ENCODE measurements at regions of chr2 and their contacts with region 1.

Region 1: GRCh38 chr2:97688062-97688827 is 18.7 kb downstream of the C2orf92 start:
- DNase-seq: no peak
- ATAC-seq: peak; percentile 96
- H3K4me3 Mint-ChIP-seq: no peak overlapping the region
- H3K27ac Mint-ChIP-seq: peak overlapping the region; percentile 73
- H3K4me1 Mint-ChIP-seq: peaks cover 10% of the 10 kb centered on the region
- H3K27me3 Mint-ChIP-seq: no peaks in the 10 kb centered on the region

Region 2: GRCh38 chr2:97673182-97673914 is 14.9 kb before region 1 on chr2:
- CTCF ChIA-PET with region 1: interaction called, 3 read pairs
- POLR2A ChIA-PET with region 1: interaction called, 5 read pairs
- intact Hi-C with region 1: loop called in 1 of 2 experiments (anchors 1 kb)
- DNase-seq: peak; percentile 69
- ATAC-seq: peak; percentile 75
- H3K4me3 Mint-ChIP-seq: peak overlapping the region; percentile 6
- H3K27ac Mint-ChIP-seq: peak overlapping the region; percentile 84
- H3K4me1 Mint-ChIP-seq: peaks cover 35% of the 10 kb centered on the region
- H3K27me3 Mint-ChIP-seq: no peaks in the 10 kb centered on the region

Region 3: GRCh38 chr2:97763176-97763845 is 75.1 kb after region 1 on chr2:
- CTCF ChIA-PET with region 1: no interaction called
- POLR2A ChIA-PET with region 1: no interaction called
- intact Hi-C with region 1: no loop called
- DNase-seq: no peak
- ATAC-seq: no peak
- H3K4me3 Mint-ChIP-seq: no peak overlapping the region
- H3K27ac Mint-ChIP-seq: no peak overlapping the region
- H3K4me1 Mint-ChIP-seq: peaks cover 12% of the 10 kb centered on the region
- H3K27me3 Mint-ChIP-seq: no peaks in the 10 kb centered on the region

Measured in activated CD4-positive, alpha-beta T cell treated with anti-CD3 and anti-CD28 coated beads for 36 hours (primary cell).